ENCODE measurements at regions of chr1 and their contacts with region 1.

Region 1: GRCh38 chr1:84603941-84604830 is 29.9 kb upstream of the CTBS start:
- DNase-seq: peak; percentile 78
- H3K4me3 ChIP-seq: peak overlapping the region; percentile 15 to 42 (median 38)
- H3K27ac ChIP-seq: peak overlapping the region; percentile 61 to 82 (median 76)
- H3K4me1 ChIP-seq: peaks cover 0 to 32% (median 19%) of the 10 kb centered on the region in 4 donors
- H3K27me3 ChIP-seq: no peaks in the 10 kb centered on the region
- CTCF ChIP-seq: peak; percentile 69 to 82 (median 79)
- EP300 ChIP-seq: no peak
- POLR2A ChIP-seq: no peak

Region 2: GRCh38 chr1:83931658-83932253 is 672.4 kb before region 1 on chr1:
- intact Hi-C with region 1: loop called (anchors 10 kb)
- DNase-seq: no peak
- H3K4me3 ChIP-seq: no peak overlapping the region
- H3K27ac ChIP-seq: no peak overlapping the region
- H3K4me1 ChIP-seq: peaks cover 0 to 12% (median 0%) of the 10 kb centered on the region in 4 donors
- H3K27me3 ChIP-seq: no peaks in the 10 kb centered on the region
- CTCF ChIP-seq: peak; percentile 57 to 70 (median 62)
- EP300 ChIP-seq: no peak
- POLR2A ChIP-seq: no peak

Region 3: DNA sequence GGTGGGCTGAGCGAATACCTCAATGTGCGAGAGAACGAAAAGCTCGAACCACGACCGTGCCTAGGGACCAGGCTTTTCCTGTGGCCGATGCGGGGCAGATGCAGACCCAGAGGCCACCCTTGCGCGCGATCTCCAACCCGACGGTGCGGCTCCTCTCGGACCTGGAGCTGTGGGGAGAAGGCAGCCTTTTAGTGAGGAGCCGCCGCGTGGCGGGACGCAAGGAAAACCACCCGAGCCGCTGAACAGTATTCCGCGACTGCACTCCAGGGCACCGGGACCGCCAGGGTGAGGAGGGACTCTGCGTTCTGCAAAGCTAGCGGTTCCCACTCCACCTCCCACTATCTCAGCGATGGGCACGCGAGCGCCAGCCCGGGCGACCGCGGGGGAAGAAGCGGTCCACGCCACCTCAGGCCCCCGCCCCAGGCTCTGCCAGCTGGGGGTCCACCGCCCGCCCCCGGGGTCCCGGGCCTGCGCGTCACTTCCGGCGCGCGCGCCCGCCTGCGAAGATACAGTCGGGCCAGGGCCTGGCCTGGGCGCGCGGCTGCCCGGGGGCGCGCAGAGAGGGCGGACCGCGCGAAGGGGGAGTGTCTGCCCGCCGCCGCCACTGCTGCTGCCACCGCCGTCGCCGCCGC is 526.6 kb before region 1 on chr1:
- intact Hi-C with region 1: loop called (anchors 10 kb)
- DNase-seq: peak; percentile 78
- H3K4me3 ChIP-seq: peak overlapping the region; percentile 76 to 97 (median 95)
- H3K27ac ChIP-seq: peak overlapping the region; percentile 91 to 94 (median 93)
- H3K4me1 ChIP-seq: peaks cover 0 to 22% (median 17%) of the 10 kb centered on the region in 4 donors
- H3K27me3 ChIP-seq: no peaks in the 10 kb centered on the region
- CTCF ChIP-seq: no peak
- EP300 ChIP-seq: no peak
- POLR2A ChIP-seq: peak; percentile 9 to 32

Region 4: GRCh38 chr1:84286071-84286470 is 318.1 kb before region 1 on chr1:
- intact Hi-C with region 1: no loop called
- DNase-seq: no peak
- H3K4me3 ChIP-seq: no peak overlapping the region
- H3K27ac ChIP-seq: no peak overlapping the region
- H3K4me1 ChIP-seq: no peaks in the 10 kb centered on the region
- H3K27me3 ChIP-seq: no peaks in the 10 kb centered on the region
- CTCF ChIP-seq: no peak
- EP300 ChIP-seq: no peak
- POLR2A ChIP-seq: no peak

Region 5: GRCh38 chr1:84478876-84479868 is 125.0 kb before region 1 on chr1 and contains the start of gene RPF1:
- intact Hi-C with region 1: loop called (anchors 2 kb)
- DNase-seq: peak; percentile 79
- H3K4me3 ChIP-seq: peak within 1 kb of the TSS; percentile 68 to 81 (median 74)
- H3K27ac ChIP-seq: peak within 1 kb of the TSS; percentile 84 to 92 (median 88)
- H3K4me1 ChIP-seq: peaks cover 0 to 31% (median 20%) of the 10 kb centered on the region in 4 donors
- H3K27me3 ChIP-seq: peaks cover 0 to 22% (median 7%) of the 10 kb centered on the region in 3 donors
- CTCF ChIP-seq: no peak
- EP300 ChIP-seq: no peak
- POLR2A ChIP-seq: peak; percentile 61 to 63
- total RNA-seq, gene RPF1: 30.7 to 66.5 (median 41.8) TPM

Region 6: DNA sequence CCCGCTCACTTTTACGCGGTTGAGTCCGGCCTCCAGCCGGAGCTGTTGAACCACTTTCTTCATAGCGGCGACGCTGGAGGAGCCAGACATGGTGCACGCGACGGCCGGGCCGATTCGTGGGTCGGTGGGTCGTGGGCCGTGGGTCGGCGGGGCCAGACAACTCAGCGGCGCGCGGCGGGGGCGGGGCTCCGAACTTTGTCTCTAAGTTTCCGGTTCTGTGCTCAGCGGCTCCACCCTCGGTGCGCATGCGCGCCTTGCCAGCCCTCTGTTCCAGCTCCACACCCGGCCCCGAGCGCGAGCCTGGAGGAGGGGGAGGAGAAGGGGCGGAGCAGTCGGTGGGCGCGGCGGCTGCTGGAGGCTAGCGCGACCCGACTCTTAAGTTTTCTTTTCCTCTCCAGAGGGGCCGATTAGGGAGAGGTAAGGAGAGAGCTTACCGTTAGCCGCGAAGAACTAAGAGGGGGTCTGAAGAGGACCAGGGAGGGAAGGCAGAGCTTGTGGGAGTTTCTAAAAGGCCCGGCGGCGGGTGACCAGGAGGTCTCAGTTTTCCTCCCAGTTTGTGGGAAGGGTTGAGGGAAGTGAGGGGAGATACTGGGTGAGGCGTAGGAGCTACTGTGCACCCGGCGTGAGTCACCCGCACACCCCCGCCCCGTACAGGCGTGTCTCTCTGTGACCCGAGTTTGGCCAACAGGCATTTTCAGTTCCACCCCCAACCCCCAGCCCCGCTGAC is 98.0 kb before region 1 on chr1 and contains the starts of genes GNG5 and SPATA1:
- intact Hi-C with region 1: loop called (anchors 1 kb)
- DNase-seq: peak; percentile 99
- H3K4me3 ChIP-seq: peak within 1 kb of the TSS; percentile 71 to 79 (median 78)
- H3K27ac ChIP-seq: peak within 1 kb of the TSS; percentile 92 to 97 (median 96)
- H3K4me1 ChIP-seq: peaks cover 0 to 50% (median 34%) of the 10 kb centered on the region in 4 donors
- H3K27me3 ChIP-seq: no peaks in the 10 kb centered on the region
- CTCF ChIP-seq: no peak
- EP300 ChIP-seq: no peak
- POLR2A ChIP-seq: peak; percentile 76 to 80
- total RNA-seq, gene GNG5: 38.4 to 106 (median 76.2) TPM
- total RNA-seq, gene SPATA1: 0.36 to 0.83 (median 0.62) TPM

Region 7: DNA sequence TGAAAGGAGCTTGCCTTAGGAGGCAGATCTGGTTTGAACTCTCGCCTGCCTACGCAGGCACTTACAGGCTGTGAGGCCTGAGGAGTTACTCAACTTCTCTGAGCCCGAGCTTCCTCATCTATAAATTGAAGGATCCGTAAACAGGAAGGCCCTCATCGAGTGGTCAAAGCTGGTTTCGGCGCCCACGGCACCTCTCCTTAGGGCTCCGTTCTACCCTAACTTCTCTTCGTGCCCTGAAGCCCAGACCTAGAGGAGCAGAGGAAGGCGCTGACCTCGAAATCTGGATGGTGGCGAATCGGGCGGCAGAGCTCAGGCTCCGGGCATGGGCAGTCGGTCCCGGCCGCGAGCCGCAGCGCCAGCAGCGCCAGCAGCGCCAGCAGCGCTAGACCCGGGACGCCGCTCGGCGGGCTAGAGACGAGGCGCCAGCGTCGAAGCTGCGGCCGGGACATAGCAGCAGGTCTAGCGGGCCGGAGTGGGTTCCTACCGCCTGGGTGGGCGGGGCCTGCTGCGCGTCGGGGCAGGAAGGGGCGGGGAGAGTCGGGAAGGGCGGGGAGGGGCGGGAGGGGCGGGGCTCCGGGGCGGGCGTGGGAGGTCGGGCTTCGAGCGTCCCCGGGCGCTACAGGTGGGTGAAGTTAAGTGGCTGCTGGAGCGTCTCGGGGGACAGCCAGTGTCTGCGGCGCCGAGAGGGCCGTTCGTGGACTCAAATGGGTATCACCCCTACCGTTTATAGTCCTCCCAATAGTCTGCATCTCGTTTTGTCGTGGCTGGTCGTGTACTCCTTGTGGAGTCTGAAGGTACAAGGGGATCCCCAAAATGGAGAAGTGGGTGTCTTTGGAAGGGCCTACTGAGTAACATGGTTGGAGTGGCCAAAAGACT is 30.0 kb before region 1 on chr1 and contains the start of gene CTBS:
- intact Hi-C with region 1: loop called (anchors 1 kb)
- DNase-seq: peak; percentile 95
- H3K4me3 ChIP-seq: peak within 1 kb of the TSS; percentile 63 to 75 (median 65)
- H3K27ac ChIP-seq: peak within 1 kb of the TSS; percentile 95 to 99 (median 98)
- H3K4me1 ChIP-seq: peaks cover 0 to 33% (median 18%) of the 10 kb centered on the region in 4 donors
- H3K27me3 ChIP-seq: no peaks in the 10 kb centered on the region
- CTCF ChIP-seq: no peak
- EP300 ChIP-seq: no peak
- POLR2A ChIP-seq: peak; percentile 55
- total RNA-seq, gene CTBS: 9.7 to 20.1 (median 14.2) TPM

Measured in sigmoid colon (tissue), 7 donors.